ENCODE measurements at regions of chr1 and their contacts with region 1.

Region 1: DNA sequence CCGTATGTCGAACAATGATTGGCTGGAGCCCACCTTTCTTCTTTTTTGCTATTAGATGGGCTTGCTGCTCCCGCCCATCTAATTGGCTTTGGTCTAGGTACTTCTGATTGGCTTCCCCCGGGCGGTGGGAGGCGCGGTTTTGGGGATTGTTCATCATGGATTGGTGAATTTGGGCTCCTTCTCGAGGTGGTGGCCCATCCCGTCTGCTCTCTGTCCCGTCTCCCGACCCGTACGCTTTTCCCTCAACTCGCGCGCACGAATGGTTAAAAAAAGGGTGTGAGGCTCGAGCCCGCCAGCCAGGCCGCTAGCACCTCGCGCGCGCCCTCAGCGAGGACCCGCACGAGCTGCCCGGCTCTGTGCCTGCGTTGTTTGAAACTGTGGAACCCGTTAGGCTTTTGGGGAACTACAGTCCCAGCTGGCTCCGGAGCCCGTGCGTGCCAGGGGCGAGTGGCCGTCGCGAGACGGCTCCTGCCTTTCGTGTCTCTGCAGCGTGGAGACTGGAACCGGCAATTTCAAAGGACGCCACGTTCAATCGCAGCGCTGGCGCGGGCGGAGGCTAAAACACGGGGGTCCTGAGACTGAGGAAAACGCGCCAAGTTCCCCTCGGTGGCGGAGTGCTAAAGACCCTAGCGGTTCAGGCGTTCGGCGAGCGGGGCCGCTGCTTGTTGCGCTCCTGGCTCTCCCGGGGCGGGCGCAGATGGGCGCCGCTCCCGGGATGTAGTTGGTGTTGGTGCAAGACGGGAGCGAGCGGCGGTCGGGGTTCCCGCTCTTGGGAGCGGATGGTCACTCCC is at the start of gene USP1:
- DNase-seq: peak; percentile 82 to 99 (median 95)

Region 2: DNA sequence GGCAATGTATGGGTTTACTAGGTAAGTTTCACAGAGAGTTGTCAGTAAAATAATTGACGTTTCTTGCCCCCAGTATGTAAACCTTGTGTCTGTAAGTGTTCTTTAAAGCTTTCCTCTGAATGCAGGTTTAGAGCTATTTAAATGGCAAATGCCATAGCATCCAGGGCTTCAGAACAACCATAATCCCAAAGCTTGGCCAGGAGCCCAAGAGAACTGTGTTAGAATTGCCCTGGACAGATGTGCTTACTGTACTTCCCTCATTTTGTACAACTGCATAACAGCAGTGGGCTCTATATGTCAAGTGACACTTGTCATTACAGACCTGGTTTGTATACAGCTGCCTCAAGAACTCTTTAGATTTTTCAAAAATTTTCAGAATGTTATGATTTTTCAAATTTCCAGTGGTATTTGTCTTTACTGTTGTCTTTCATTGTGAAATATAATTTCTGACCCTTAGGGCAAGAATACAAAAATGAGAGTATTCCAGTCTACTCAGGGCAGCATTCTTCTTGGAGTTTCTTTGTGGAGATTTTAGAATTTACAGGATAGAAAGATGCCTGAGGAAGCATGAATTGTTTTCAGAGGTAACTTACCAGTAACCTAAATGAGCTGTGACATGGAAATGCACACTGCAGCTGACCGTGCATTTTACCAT is 378.9 kb before region 1 on chr1:
- intact Hi-C with region 1: no loop called
- DNase-seq: no peak

Region 3: GRCh38 chr1:62398377-62398776 is 38.3 kb before region 1 on chr1:
- intact Hi-C with region 1: no loop called
- DNase-seq: no peak

Region 4: GRCh38 chr1:62687903-62688686 is 251.4 kb after region 1 on chr1 and contains the start of gene DOCK7:
- intact Hi-C with region 1: loop called (anchors 2 kb)
- DNase-seq: peak; percentile 62 to 95 (median 76)

Region 5: DNA sequence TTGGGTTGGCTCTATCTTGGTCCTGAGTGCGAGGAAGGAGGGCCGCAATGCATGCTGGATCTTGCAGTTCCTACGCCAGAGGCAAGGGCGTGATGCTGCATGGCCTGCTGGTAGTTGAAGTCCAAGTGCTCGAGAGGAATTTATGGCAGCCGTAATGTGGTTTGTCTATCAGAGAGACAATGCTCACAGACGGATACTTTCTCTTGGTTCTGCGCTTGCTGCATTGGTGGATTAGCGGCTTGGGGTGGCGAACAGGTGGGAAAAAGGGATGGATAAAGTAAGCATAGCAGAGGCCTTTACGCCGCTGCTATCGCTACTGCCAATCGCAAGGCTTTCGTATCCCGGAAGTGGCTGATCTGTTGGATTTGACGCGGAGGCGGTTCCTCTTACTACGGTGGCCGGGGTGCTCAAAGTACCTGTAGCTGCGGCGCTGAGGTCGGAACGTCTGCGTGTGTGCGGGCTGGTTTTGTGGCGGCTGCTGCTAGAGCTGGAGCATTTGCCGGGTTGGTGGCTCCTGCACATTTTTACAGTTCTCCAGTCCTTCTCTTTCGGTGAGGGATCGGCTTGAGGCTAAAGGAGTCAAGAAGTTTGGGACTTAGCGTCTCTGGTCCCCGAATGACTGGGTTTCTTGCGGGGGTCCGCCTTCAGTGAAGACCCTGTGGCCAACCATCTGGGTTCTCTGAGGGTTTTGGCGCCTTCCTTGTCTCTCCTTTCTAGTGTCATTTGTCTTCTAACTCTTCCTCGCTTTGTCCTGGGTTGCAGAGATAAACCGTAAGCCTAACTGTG is 347.3 kb after region 1 on chr1 and contains the start of gene ATG4C:
- intact Hi-C with region 1: loop called (anchors 5 kb)
- DNase-seq: peak; percentile 94 to 99 (median 95)

Region 6: DNA sequence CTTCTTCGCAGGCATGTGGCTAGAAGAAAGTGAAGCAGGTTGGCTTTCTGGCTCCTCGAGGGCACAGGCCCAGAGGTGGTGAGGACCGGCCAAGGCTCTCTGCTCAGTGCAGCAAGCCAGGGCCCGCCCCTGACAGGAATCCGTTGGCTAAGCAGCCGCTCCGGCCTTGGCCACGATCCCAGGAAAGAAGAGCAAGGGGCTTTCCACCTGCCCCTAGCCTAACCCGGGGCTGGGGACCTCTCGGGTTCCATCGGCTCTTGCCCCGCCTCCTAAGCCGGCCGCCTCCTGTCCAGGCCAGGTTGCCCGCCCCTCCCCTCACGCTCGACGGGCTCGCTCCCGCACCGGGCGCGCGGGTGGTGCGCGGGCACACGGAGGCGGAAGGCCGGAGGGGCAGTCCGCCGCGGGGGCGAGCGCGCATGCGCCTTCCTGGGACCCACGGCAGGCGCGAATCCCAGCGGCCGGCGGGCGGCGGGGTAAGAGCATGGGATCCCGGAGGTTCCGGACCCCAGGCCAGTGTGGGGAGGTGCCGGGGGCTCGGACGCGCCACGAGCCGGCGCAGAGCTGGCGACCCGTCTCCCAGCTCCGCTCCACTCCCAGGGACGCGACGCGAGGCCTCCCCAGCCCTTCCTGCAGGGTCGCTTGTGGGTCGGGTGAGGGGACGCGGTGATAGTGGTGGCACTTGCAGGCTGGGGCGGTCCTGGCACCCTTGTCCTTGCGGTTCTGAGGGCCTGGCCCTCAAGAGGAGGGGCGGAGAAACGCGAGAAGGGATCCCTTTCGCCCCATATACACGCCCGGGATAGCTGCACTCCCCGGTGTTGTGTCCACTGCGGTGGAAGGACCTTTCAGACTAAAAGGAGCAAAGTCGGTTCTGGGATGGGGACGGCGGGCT is 930.8 kb after region 1 on chr1 and contains the start of gene ALG6:
- intact Hi-C with region 1: loop called (anchors 10 kb)
- DNase-seq: peak; percentile 84 to 99 (median 92)

Measured in posterior cingulate gyrus (tissue), 11 donors.